Mammary epithelial cell (primary cell): ENCODE measurements at regions of chr17 and their contacts with region 1.

Region 1: DNA sequence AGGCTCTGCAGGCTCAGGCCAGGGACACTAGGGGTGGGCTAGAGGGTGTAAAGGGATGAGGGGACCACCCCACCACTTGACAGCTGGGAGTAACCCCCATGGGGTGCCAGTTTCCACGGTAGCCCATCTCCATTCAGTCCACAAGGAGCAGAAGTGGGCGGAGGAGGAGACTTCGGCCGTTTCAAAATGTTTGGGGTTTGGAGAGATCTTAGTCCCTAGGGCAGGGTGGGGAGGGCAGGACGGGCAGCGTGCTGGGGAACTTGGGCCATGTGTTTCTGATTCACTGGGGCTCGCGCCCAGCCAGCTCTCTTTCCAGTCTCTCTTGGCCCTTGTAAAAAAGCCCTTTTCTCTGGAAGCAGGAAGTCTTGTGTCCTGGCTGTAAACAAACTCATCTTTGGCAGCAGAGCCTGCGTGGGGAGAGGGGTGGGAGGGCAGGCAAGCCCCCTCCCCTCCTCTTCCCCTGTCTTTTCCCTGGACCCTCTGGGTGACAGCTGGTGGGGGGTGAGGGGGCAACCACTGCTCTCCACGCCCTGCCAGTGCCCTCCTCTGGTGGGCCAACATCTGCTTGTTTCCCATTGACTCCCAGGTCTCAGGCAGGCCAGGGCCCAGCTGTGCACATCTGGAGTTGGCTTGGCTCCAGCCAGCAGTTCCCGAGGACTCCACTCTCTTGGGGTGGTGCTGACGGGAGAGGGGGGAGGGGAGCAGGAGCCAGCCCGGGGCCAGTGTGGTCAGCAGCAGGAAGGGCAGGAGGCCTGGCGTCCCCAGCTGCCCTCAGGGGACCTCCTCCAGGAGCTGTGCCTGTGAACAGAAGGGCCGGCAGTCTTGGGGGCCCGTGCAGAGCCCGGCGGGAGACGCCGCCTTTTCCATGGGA is 8.1 kb downstream of the CYGB start:
- DNase-seq: peak; percentile 75
- H3K4me3 ChIP-seq: no peak overlapping the region
- H3K27ac ChIP-seq: peak overlapping the region; percentile 87
- H3K4me1 ChIP-seq: peaks cover 64% of the 10 kb centered on the region
- H3K27me3 ChIP-seq: peaks cover 2% of the 10 kb centered on the region
- CTCF ChIP-seq: no peak

Region 2: GRCh38 chr17:76540381-76541300 is 11.2 kb after region 1 on chr17:
- CTCF ChIA-PET with region 1: no interaction called
- dilution Hi-C with region 1: no loop called
- in situ Hi-C with region 1: no loop called
- intact Hi-C with region 1: loop called (anchors 1 kb)
- DNase-seq: peak; percentile 92
- H3K4me3 ChIP-seq: peak overlapping the region in 2 of 3 experiments; percentile 36 to 40
- H3K27ac ChIP-seq: peak overlapping the region; percentile 34
- H3K4me1 ChIP-seq: peaks cover 24% of the 10 kb centered on the region
- H3K27me3 ChIP-seq: no peaks in the 10 kb centered on the region
- CTCF ChIP-seq: peak in 1 of 2 donors; percentile 35

Region 3: GRCh38 chr17:76737082-76737675 is 207.7 kb after region 1 on chr17 and contains the start of gene SRSF2:
- CTCF ChIA-PET with region 1: no interaction called
- dilution Hi-C with region 1: no loop called
- in situ Hi-C with region 1: no loop called
- intact Hi-C with region 1: no loop called
- DNase-seq: peak; percentile 99
- H3K4me3 ChIP-seq: peak within 1 kb of the TSS; percentile 98 to 100 (median 99)
- H3K27ac ChIP-seq: peak within 1 kb of the TSS; percentile 94
- H3K4me1 ChIP-seq: peaks cover 25% of the 10 kb centered on the region
- H3K27me3 ChIP-seq: no peaks in the 10 kb centered on the region
- CTCF ChIP-seq: no peak
- total RNA-seq, gene SRSF2: 110 to 196 TPM